CD4-positive, alpha-beta T cell (primary cell): ENCODE measurements at regions of chr4 and their contacts with region 1.

Region 1: GRCh38 chr4:89307446-89308160 is at the start of gene GPRIN3:
- DNase-seq: peak; percentile 45 to 88 (median 63)
- ATAC-seq: peak; percentile 66
- H3K4me3 ChIP-seq: peak within 1 kb of the TSS; percentile 93
- H3K4me3 Mint-ChIP-seq: peak within 1 kb of the TSS; percentile 95
- H3K27ac ChIP-seq: peak within 1 kb of the TSS; percentile 73 to 88
- H3K27ac Mint-ChIP-seq: peak within 1 kb of the TSS; percentile 92
- H3K4me1 ChIP-seq: peaks cover 26% of the 10 kb centered on the region
- H3K4me1 Mint-ChIP-seq: peaks cover 67% of the 10 kb centered on the region
- H3K27me3 ChIP-seq: no peaks in the 10 kb centered on the region
- H3K27me3 Mint-ChIP-seq: no peaks in the 10 kb centered on the region
- CTCF ChIP-seq: no peak
- total RNA-seq, gene GPRIN3: 46.4 TPM

Region 2: GRCh38 chr4:89254847-89255246 is 52.8 kb before region 1 on chr4:
- CTCF ChIA-PET with region 1: interaction called, 8 read pairs
- POLR2A ChIA-PET with region 1: interaction called, 5 read pairs
- intact Hi-C with region 1: loop called (anchors 2 to 5 kb)
- DNase-seq: peak in 13 of 14 experiments; percentile 7 to 81 (median 33)
- ATAC-seq: peak; percentile 65
- H3K4me3 ChIP-seq: no peak overlapping the region
- H3K4me3 Mint-ChIP-seq: peak overlapping the region; percentile 1
- H3K27ac ChIP-seq: peak overlapping the region in 1 of 2 donors; percentile 38
- H3K27ac Mint-ChIP-seq: peak overlapping the region; percentile 47
- H3K4me1 ChIP-seq: peaks cover 38% of the 10 kb centered on the region
- H3K4me1 Mint-ChIP-seq: peaks cover 89% of the 10 kb centered on the region
- H3K27me3 ChIP-seq: no peaks in the 10 kb centered on the region
- H3K27me3 Mint-ChIP-seq: no peaks in the 10 kb centered on the region
- CTCF ChIP-seq: peak; percentile 88

Region 3: DNA sequence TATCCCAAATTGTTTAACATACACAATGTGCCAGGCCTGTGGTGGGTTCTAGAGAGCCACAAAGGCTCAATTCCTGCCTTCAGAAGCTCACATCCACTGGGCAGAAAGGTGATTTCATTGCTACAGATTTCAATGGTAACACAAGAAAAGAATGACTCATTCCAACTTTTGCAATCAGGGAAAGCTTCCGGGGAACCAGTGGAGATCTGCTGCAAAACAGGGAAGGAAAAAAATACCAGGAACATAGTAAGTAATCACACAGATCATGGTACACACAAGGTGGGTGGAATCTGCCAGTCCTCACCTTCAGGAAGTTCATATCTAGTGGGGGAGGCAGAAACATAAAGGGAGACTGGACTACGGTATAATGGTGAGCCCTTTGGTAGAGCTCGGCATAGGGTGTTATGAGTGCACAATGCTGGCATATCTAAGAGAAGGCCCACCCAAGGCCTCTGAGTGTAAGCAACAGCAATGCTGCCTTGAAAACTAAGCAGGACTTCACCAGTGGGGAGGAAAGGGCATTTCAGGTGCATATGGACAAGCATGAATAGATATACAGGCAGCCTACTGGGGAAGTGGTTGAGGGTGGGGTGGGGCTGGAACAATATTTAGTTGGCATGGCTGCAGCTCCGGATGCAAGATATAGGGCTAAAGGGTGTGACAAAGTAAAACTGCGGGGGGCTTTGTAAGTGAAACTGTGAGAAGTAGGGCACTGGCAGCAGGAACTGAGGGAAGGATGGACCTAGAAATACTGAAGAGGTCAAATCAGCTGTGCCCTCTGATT is 24.2 kb before region 1 on chr4:
- CTCF ChIA-PET with region 1: interaction called, 6 read pairs
- POLR2A ChIA-PET with region 1: interaction called, 10 read pairs
- intact Hi-C with region 1: no loop called
- DNase-seq: peak in 10 of 14 experiments; percentile 27 to 94 (median 43)
- ATAC-seq: peak; percentile 82
- H3K4me3 ChIP-seq: peak overlapping the region; percentile 31
- H3K4me3 Mint-ChIP-seq: peak overlapping the region; percentile 62
- H3K27ac ChIP-seq: peak overlapping the region; percentile 39 to 92
- H3K27ac Mint-ChIP-seq: peak overlapping the region; percentile 89
- H3K4me1 ChIP-seq: peaks cover 67% of the 10 kb centered on the region
- H3K4me1 Mint-ChIP-seq: peaks cover 75% of the 10 kb centered on the region
- H3K27me3 ChIP-seq: no peaks in the 10 kb centered on the region
- H3K27me3 Mint-ChIP-seq: no peaks in the 10 kb centered on the region
- CTCF ChIP-seq: no peak

Region 4: GRCh38 chr4:89336818-89337420 is 29.3 kb after region 1 on chr4:
- CTCF ChIA-PET with region 1: no interaction called
- POLR2A ChIA-PET with region 1: interaction called, 11 read pairs
- intact Hi-C with region 1: no loop called
- DNase-seq: peak in 4 of 14 experiments; percentile 9 to 22 (median 10)
- ATAC-seq: no peak
- H3K4me3 ChIP-seq: no peak overlapping the region
- H3K4me3 Mint-ChIP-seq: no peak overlapping the region
- H3K27ac ChIP-seq: no peak overlapping the region
- H3K27ac Mint-ChIP-seq: no peak overlapping the region
- H3K4me1 ChIP-seq: peaks cover 5% of the 10 kb centered on the region
- H3K4me1 Mint-ChIP-seq: no peaks in the 10 kb centered on the region
- H3K27me3 ChIP-seq: no peaks in the 10 kb centered on the region
- H3K27me3 Mint-ChIP-seq: no peaks in the 10 kb centered on the region
- CTCF ChIP-seq: no peak